ENCODE measurements at regions of chrX and their contacts with region 1.

Region 1: GRCh38 chrX:54044126-54044876 is at the start of gene PHF8:
- DNase-seq: peak; percentile 91
- H3K4me3 Mint-ChIP-seq: peak within 1 kb of the TSS; percentile 92
- H3K27ac Mint-ChIP-seq: peak within 1 kb of the TSS; percentile 98
- H3K4me1 Mint-ChIP-seq: peaks cover 18% of the 10 kb centered on the region
- H3K27me3 Mint-ChIP-seq: no peaks in the 10 kb centered on the region
- total RNA-seq, gene PHF8: 50.7 and 54.8 TPM in 2 replicates

Region 2: GRCh38 chrX:52995135-52996020 is 1048.9 kb before region 1 on chrX:
- intact Hi-C with region 1: loop called (anchors 5 kb)
- DNase-seq: peak; percentile 88
- H3K4me3 Mint-ChIP-seq: peak overlapping the region; percentile 89
- H3K27ac Mint-ChIP-seq: peak overlapping the region; percentile 95
- H3K4me1 Mint-ChIP-seq: peaks cover 21% of the 10 kb centered on the region
- H3K27me3 Mint-ChIP-seq: no peaks in the 10 kb centered on the region

Region 3: DNA sequence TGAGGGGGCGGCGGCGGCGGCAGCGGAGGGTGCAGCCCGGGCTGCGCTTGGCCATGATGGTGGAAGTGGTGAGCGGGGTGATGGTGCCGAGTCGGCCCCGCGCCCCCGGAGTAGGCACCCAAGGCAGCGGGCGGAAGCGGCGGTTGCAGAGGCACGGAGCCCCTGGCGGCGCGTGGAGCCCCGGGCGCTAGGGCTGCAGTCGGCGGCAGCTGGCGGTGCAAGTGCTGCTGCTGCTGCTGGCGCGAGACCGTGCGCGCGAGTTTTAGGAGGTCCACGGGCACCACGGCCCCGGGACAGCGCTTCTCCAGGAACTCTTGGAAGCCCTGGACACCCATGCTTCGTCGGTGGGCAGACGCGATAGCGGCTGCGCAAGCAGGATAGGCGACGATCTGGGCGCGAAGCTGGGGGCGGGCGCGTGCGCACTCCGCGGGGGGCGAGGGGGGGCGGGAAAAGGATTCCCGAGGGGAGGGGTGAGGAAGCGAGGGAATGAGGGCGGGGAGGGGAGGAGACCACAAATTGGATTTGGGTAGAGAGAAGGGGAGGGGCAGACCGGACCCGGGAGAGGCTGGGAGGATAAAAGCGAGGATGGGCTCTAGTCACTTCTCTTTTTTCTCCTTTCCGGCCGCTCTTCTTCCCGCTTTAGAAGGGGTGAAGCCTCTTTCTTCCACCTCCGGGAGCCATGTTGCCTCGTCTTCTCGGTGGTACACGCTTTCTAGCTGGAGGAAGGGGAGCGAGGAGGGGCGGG is 138.7 kb after region 1 on chrX and contains the start of gene FAM120C:
- intact Hi-C with region 1: loop called (anchors 1 kb)
- DNase-seq: peak; percentile 38
- H3K4me3 Mint-ChIP-seq: peak within 1 kb of the TSS; percentile 90
- H3K27ac Mint-ChIP-seq: peak within 1 kb of the TSS; percentile 91
- H3K4me1 Mint-ChIP-seq: peaks cover 40% of the 10 kb centered on the region
- H3K27me3 Mint-ChIP-seq: no peaks in the 10 kb centered on the region
- total RNA-seq, gene FAM120C: 10.4 and 11.8 TPM in 2 replicates

Region 4: GRCh38 chrX:54439967-54440871 is 395.9 kb after region 1 on chrX and contains the start of gene TSR2:
- intact Hi-C with region 1: loop called (anchors 1 kb)
- DNase-seq: peak; percentile 75
- H3K4me3 Mint-ChIP-seq: peak within 1 kb of the TSS; percentile 96
- H3K27ac Mint-ChIP-seq: peak within 1 kb of the TSS; percentile 83
- H3K4me1 Mint-ChIP-seq: peaks cover 27% of the 10 kb centered on the region
- H3K27me3 Mint-ChIP-seq: no peaks in the 10 kb centered on the region
- total RNA-seq, gene TSR2: 43.6 and 44.1 TPM in 2 replicates

Region 5: GRCh38 chrX:54639346-54640102 is 595.2 kb after region 1 on chrX:
- intact Hi-C with region 1: loop called (anchors 1 kb)
- DNase-seq: peak; percentile 87
- H3K4me3 Mint-ChIP-seq: peak overlapping the region; percentile 93
- H3K27ac Mint-ChIP-seq: peak overlapping the region; percentile 99
- H3K4me1 Mint-ChIP-seq: peaks cover 10% of the 10 kb centered on the region
- H3K27me3 Mint-ChIP-seq: no peaks in the 10 kb centered on the region

Region 6: DNA sequence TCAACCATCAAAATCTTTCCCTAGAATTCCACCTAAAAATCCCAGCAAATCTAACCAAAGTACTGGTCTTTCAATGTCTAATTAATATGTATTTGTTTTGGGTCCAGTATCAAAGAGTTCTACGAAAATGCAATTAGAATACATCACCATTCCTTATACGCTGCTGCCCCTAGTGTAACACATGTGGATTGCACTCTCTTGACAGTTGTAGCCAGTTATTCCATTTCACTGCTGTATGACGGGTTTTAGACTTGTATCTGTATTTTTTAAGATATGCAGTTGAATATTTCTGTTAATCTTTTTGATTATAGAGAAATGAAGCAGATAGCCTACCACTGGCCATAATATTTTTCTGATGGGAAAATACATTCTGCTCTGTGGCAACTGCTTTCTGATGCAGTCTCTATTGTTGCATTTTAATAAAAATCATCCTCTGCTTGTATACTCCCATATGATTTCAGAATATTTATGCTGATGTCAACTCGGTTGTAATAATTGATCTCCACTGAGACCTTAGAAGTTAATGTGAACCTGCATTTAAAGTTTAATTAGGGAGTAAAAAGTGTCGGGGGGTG is 1013.5 kb after region 1 on chrX:
- intact Hi-C with region 1: loop called (anchors 10 kb)
- DNase-seq: peak; percentile 0
- H3K4me3 Mint-ChIP-seq: peak overlapping the region; percentile 58
- H3K27ac Mint-ChIP-seq: no peak overlapping the region
- H3K4me1 Mint-ChIP-seq: peaks cover 12% of the 10 kb centered on the region
- H3K27me3 Mint-ChIP-seq: peaks cover under 1% of the 10 kb centered on the region

Measured in activated T-helper 1 cell treated with anti-CD3 and anti-CD28 coated beads, Interleukin-12 subunit alpha, Interleukin-12 subunit beta, Interleukin-2, Interleukin-4 antibody, amounts not matched to agents 30 ng/mL and 10 ng/mL and 1 ng/mL, durations not matched to agents 14 hours and 24 hours and 36 hours (primary cell).